ENCODE measurements at regions of chrX and their contacts with region 1.

Region 1: GRCh38 chrX:117996918-117997480 is 119.6 kb downstream of the KLHL13 start:
- DNase-seq: no peak

Region 2: GRCh38 chrX:118038614-118039365 is 41.8 kb after region 1 on chrX:
- intact Hi-C with region 1: no loop called
- DNase-seq: peak; percentile 68

Region 3: DNA sequence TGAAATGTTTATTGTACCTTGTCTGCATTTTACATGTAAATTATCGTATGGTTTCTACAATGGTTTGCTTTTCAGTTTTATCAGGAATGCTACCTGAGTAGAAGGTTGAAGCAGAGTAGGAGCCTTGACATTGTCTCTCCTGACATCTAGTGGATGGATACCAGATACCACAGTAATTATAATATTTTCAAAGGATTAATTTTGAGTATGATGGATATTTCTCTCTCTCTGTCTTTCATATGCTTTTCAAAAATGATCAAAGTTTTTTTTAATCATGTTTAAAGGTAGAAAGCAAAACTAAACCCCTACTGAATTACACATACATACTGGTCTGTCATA is 229.1 kb after region 1 on chrX:
- intact Hi-C with region 1: loop called (anchors 10 kb)
- DNase-seq: no peak